Adrenal gland (tissue), 19 donors: ENCODE measurements at regions of chr1 and their contacts with region 1.

Region 1: DNA sequence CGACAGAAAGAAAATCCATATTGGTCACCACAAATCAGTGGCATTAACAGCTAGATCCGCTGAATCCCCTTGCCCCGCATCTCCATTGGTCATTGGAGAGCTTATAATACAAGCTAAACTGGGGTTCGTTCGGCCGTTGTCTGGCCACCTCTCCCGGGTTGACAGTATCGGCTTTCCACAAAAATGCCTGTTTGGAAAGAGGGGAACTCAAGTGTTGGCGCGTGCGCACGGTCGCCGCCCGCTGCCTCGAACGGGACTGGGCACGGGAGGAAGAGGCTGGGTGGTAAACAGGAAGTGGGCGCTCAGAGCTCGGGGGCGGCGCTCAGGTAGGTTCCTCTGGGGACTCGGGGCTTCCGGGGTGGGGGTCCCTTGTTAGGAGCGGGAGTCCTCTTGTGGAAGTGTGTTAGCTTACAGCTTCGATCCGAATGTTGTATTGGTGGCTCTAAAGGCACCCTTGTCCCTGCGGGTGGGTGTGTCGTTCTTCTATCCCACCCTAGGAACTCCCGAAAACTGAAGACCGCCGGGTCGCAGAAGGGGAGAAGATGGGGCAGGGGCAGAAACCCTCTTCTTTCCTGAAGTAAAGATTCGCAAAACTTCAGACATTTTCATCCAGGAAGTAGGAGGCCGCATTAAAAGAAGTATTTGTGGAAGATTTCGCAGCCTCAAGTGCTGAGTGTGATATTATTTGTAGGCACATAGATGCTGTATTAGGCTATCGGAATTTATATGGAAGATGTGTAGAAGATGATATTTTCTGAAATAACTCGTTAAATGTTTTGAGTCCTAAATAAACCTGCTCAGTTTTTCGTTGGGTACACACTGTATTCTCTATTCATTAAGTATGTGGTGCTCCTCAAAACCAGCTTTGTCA is 962 bp downstream of the BROX start:
- DNase-seq: peak; percentile 92 to 96 (median 94)
- H3K4me3 ChIP-seq: peak overlapping the region; percentile 43 to 97 (median 80)
- H3K27ac ChIP-seq: peak overlapping the region; percentile 93 to 99 (median 98)
- H3K4me1 ChIP-seq: peaks cover 0 to 22% of the 10 kb centered on the region in 2 donors
- H3K27me3 ChIP-seq: no peaks in the 10 kb centered on the region
- CTCF ChIP-seq: no peak
- POLR2A ChIP-seq: peak; percentile 1 to 68

Region 2: GRCh38 chr1:222654849-222655248 is 58.5 kb before region 1 on chr1:
- intact Hi-C with region 1: loop called in 1 of 2 experiments (anchors 10 kb)
- DNase-seq: peak in 6 of 7 donors; percentile 30 to 73 (median 50)
- H3K4me3 ChIP-seq: no peak overlapping the region
- H3K27ac ChIP-seq: peak overlapping the region in 3 of 5 donors; percentile 27 to 67 (median 50)
- H3K4me1 ChIP-seq: peaks cover 0 to 10% of the 10 kb centered on the region in 2 donors
- H3K27me3 ChIP-seq: no peaks in the 10 kb centered on the region
- CTCF ChIP-seq: no peak
- POLR2A ChIP-seq: no peak

Region 3: GRCh38 chr1:222665964-222666363 is 47.4 kb before region 1 on chr1:
- intact Hi-C with region 1: no loop called
- DNase-seq: no peak
- H3K4me3 ChIP-seq: no peak overlapping the region
- H3K27ac ChIP-seq: no peak overlapping the region
- H3K4me1 ChIP-seq: no peaks in the 10 kb centered on the region
- H3K27me3 ChIP-seq: no peaks in the 10 kb centered on the region
- CTCF ChIP-seq: no peak
- POLR2A ChIP-seq: no peak

Region 4: GRCh38 chr1:222697826-222698225 is 15.5 kb before region 1 on chr1:
- intact Hi-C with region 1: no loop called
- DNase-seq: no peak
- H3K4me3 ChIP-seq: no peak overlapping the region
- H3K27ac ChIP-seq: no peak overlapping the region
- H3K4me1 ChIP-seq: no peaks in the 10 kb centered on the region
- H3K27me3 ChIP-seq: no peaks in the 10 kb centered on the region
- CTCF ChIP-seq: no peak
- POLR2A ChIP-seq: no peak

Region 5: GRCh38 chr1:222792744-222793143 is 79.4 kb after region 1 on chr1:
- intact Hi-C with region 1: no loop called
- DNase-seq: peak in 1 of 7 donors; percentile 18
- H3K4me3 ChIP-seq: no peak overlapping the region
- H3K27ac ChIP-seq: no peak overlapping the region
- H3K4me1 ChIP-seq: peaks cover 0 to 5% of the 10 kb centered on the region in 2 donors
- H3K27me3 ChIP-seq: no peaks in the 10 kb centered on the region
- CTCF ChIP-seq: peak in 5 of 6 experiments; percentile 46 to 79 (median 69)
- POLR2A ChIP-seq: no peak